ENCODE measurements at regions of chr15 and their contacts with region 1.

Region 1: GRCh38 chr15:60507596-60508424 is 28.9 kb upstream of the ICE2 start:
- DNase-seq: peak; percentile 88
- H3K4me3 Mint-ChIP-seq: peak overlapping the region; percentile 15
- H3K27ac Mint-ChIP-seq: peak overlapping the region; percentile 62
- H3K4me1 Mint-ChIP-seq: peaks cover 29% of the 10 kb centered on the region
- H3K27me3 Mint-ChIP-seq: no peaks in the 10 kb centered on the region

Region 2: GRCh38 chr15:60520825-60521368 is 13.1 kb after region 1 on chr15:
- intact Hi-C with region 1: loop called (anchors 1 kb)
- DNase-seq: peak; percentile 93
- H3K4me3 Mint-ChIP-seq: peak overlapping the region; percentile 8
- H3K27ac Mint-ChIP-seq: peak overlapping the region; percentile 59
- H3K4me1 Mint-ChIP-seq: peaks cover 36% of the 10 kb centered on the region
- H3K27me3 Mint-ChIP-seq: no peaks in the 10 kb centered on the region

Region 3: DNA sequence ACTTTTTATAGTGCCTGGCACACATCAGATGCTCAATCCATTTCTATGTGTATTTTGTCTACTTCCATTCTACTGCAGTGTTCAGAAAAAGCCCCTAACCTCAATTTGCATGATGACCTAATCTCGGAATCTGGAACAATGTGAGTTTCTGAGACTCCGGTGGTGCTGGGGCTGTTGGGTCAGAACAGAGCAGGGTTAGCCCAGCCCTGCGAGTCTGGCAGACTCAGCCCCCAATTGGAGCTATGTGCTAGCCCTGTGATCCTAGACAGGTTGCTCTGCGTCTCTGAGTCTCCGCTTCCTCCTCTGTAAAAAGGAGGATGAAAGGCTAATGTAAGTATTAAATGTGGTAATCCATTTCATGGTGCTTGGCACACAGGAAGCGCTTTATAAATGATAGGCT is 66.1 kb after region 1 on chr15:
- intact Hi-C with region 1: no loop called
- DNase-seq: peak; percentile 81
- H3K4me3 Mint-ChIP-seq: peak overlapping the region; percentile 71
- H3K27ac Mint-ChIP-seq: peak overlapping the region; percentile 95
- H3K4me1 Mint-ChIP-seq: peaks cover 68% of the 10 kb centered on the region
- H3K27me3 Mint-ChIP-seq: no peaks in the 10 kb centered on the region

Region 4: DNA sequence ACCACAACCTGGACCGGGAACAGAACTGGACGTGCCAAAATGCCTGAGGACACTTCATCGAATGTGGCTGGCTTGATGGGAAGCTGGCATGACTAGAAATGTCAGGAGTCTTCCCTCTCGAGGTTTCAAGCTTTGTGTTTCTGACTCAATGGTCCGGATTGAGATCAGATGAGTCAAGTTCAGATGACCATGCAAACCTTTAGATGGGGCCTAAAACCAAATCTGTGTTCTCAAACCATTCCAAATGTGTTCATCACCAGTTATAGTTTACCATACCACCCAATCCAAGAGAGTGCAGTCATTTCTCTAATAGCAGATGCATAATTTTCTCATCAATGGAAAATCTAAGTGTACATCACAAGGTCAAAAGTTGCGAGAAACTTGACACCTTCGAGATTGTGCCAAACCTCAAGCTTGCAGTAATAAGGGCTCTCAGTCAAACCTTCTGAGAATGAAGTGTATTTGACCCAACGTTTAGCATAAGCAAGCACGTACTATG is 352.2 kb after region 1 on chr15:
- intact Hi-C with region 1: no loop called
- DNase-seq: no peak
- H3K4me3 Mint-ChIP-seq: no peak overlapping the region
- H3K27ac Mint-ChIP-seq: no peak overlapping the region
- H3K4me1 Mint-ChIP-seq: peaks cover 15% of the 10 kb centered on the region
- H3K27me3 Mint-ChIP-seq: no peaks in the 10 kb centered on the region

Region 5: GRCh38 chr15:60916679-60917460 is 409.1 kb after region 1 on chr15:
- intact Hi-C with region 1: loop called (anchors 1 kb)
- DNase-seq: peak; percentile 95
- H3K4me3 Mint-ChIP-seq: no peak overlapping the region
- H3K27ac Mint-ChIP-seq: peak overlapping the region; percentile 75
- H3K4me1 Mint-ChIP-seq: peaks cover 27% of the 10 kb centered on the region
- H3K27me3 Mint-ChIP-seq: no peaks in the 10 kb centered on the region

Region 6: DNA sequence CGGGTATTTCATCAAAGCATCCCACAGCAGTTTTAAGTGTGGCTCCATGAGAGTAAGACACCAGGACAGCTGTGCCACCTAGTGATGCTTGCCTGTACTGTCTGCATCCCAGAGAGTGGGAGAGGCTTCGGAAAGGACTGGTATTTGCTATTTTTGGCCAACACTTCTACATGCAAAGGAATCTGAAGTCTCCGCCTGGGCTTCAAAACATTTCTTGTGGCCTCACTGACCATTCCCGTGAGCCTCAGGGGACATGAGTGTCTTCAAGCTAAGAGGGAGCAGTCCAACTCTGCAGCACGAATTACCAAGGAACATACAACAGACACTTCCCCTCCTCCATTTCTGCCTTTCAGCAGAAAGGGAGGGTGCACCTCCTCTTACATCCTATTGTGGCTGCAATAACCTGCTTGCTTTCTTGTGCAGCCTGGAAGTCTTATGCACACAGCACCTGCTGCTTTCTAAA is 543.8 kb after region 1 on chr15:
- intact Hi-C with region 1: loop called (anchors 10 kb)
- DNase-seq: no peak
- H3K4me3 Mint-ChIP-seq: no peak overlapping the region
- H3K27ac Mint-ChIP-seq: no peak overlapping the region
- H3K4me1 Mint-ChIP-seq: no peaks in the 10 kb centered on the region
- H3K27me3 Mint-ChIP-seq: peaks cover 4% of the 10 kb centered on the region

Region 7: DNA sequence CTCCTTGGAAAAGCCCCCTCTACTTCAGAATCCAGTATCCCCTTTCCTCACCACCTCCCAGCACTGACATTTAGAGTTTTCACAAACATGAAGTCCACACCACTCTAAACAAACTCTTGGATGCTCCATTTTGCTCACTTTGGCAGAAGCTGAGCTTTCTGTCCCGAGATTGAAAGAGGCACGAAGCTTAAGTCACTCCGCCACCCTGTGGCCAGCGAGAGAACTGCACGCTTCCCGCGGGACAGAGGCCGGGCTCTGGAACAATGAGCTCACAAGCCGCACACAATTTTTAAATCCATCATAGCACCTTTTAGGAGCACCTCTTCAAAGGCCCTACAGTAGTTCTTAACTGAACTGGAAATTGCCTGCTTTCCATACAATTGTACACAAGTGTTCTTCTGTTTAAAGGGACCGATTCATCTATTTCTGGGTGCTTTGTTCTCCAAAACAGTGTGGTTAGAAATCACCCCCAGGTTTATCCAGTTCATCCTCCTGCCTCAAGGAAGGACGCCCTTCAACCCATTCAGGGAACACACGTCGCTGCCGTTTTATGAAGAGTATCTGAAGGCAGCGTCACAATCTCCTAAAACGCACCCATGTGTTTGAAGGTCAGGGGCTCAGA is 1326.4 kb after region 1 on chr15:
- intact Hi-C with region 1: loop called (anchors 10 kb)
- DNase-seq: peak; percentile 92
- H3K4me3 Mint-ChIP-seq: no peak overlapping the region
- H3K27ac Mint-ChIP-seq: no peak overlapping the region
- H3K4me1 Mint-ChIP-seq: peaks cover 5% of the 10 kb centered on the region
- H3K27me3 Mint-ChIP-seq: peaks cover 15% of the 10 kb centered on the region

Measured in activated CD4-positive, alpha-beta T cell treated with anti-CD3 and anti-CD28 coated beads, Interleukin-2, amount 10 ng/mL, durations not matched to agents 24 days and 14 days (primary cell).